MCF 10A (cell line): ENCODE measurements at regions of chr22 and their contacts with region 1.

Region 1: DNA sequence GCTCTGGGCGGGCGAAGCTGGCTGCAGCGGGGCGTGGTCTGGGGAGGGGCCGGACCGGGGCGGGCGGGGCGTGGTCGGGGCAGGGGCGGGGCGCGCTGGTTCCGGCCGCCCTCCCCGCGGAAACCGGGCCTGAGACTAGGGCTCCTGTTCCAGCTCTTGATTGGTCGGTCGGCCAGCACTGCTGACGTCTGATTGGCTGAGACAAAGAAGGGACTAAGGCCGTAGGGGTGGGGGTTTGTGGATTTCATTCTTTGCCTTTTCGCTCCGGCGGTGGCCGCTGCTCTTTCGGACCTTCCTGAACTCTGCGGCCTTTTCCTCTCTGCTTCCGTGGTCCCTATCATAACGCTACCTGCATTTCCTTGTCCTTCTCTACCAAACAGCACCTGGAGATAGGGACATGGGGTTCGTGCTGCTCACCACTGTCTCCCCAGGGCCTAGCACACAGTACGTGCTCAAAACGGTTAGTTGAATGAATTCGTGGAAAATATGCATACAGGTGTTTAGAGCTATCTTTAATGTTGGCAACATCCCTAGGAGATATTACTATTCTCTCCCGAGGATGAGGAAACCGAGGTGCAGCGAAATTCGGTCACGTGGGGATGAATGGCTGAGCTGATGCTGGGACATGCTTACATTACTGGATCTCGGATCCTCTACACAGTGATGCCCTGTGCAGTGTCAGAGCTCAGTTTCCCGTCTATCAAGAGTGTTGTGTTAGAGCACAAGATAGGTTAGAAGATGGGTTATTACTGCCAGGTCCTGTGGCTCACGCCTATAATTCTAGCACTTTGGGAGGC is 62.8 kb downstream of the NFAM1 start:
- DNase-seq: peak; percentile 96
- H3K4me3 Mint-ChIP-seq: peak overlapping the region; percentile 85
- H3K27ac Mint-ChIP-seq: no peak overlapping the region
- H3K4me1 Mint-ChIP-seq: peaks cover 11% of the 10 kb centered on the region
- H3K27me3 Mint-ChIP-seq: no peaks in the 10 kb centered on the region
- CTCF ChIP-seq: no peak

Region 2: GRCh38 chr22:42188808-42189447 is 180.5 kb before region 1 on chr22:
- CTCF ChIA-PET with region 1: no interaction called
- POLR2A ChIA-PET with region 1: no interaction called
- intact Hi-C with region 1: no loop called
- DNase-seq: peak; percentile 61
- H3K4me3 Mint-ChIP-seq: no peak overlapping the region
- H3K27ac Mint-ChIP-seq: no peak overlapping the region
- H3K4me1 Mint-ChIP-seq: peaks cover 16% of the 10 kb centered on the region
- H3K27me3 Mint-ChIP-seq: no peaks in the 10 kb centered on the region
- CTCF ChIP-seq: no peak

Region 3: GRCh38 chr22:42357634-42358296 is 11.7 kb before region 1 on chr22:
- CTCF ChIA-PET with region 1: interaction called, 10 read pairs
- POLR2A ChIA-PET with region 1: interaction called, 21 read pairs
- intact Hi-C with region 1: no loop called
- DNase-seq: peak; percentile 94
- H3K4me3 Mint-ChIP-seq: no peak overlapping the region
- H3K27ac Mint-ChIP-seq: peak overlapping the region; percentile 97
- H3K4me1 Mint-ChIP-seq: peaks cover 18% of the 10 kb centered on the region
- H3K27me3 Mint-ChIP-seq: no peaks in the 10 kb centered on the region
- CTCF ChIP-seq: no peak

Region 4: GRCh38 chr22:42425337-42425988 is 56.0 kb after region 1 on chr22:
- CTCF ChIA-PET with region 1: no interaction called
- POLR2A ChIA-PET with region 1: interaction called, 10 read pairs
- intact Hi-C with region 1: loop called (anchors 1 kb)
- DNase-seq: peak; percentile 66
- H3K4me3 Mint-ChIP-seq: peak overlapping the region; percentile 28
- H3K27ac Mint-ChIP-seq: peak overlapping the region; percentile 25
- H3K4me1 Mint-ChIP-seq: peaks cover 15% of the 10 kb centered on the region
- H3K27me3 Mint-ChIP-seq: no peaks in the 10 kb centered on the region
- CTCF ChIP-seq: no peak